Heart left ventricle (tissue), 16 donors: ENCODE measurements at regions of chr12 and their contacts with region 1.

Region 1: DNA sequence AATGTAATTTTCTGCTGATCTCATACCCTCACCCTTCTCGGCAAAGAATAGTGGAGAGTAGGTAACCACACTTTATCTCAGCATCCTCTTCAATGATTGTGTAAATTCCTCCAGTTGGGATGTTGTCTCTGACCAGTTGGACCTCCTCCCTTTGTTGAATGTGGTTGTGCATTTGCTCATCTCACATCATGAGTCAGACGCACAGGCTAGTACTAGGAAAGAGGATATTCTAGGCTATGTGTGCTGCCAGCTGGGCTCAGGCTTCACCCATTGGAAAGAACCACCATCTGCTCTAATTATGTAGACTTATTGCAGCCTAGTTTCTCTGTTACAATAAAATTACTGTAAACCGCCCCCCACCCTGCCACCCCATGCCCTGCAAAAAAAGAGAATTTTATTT is 90.3 kb downstream of the LMO3 start:
- DNase-seq: no peak
- ATAC-seq: no peak
- H3K4me3 ChIP-seq: no peak overlapping the region
- H3K27ac ChIP-seq: no peak overlapping the region
- H3K4me1 ChIP-seq: no peaks in the 10 kb centered on the region
- H3K27me3 ChIP-seq: no peaks in the 10 kb centered on the region
- CTCF ChIP-seq: no peak
- POLR2A ChIP-seq: no peak

Region 2: GRCh38 chr12:16421810-16422209 is 93.9 kb before region 1 on chr12:
- intact Hi-C with region 1: no loop called
- DNase-seq: no peak
- ATAC-seq: no peak
- H3K4me3 ChIP-seq: no peak overlapping the region
- H3K27ac ChIP-seq: no peak overlapping the region
- H3K4me1 ChIP-seq: no peaks in the 10 kb centered on the region
- H3K27me3 ChIP-seq: no peaks in the 10 kb centered on the region
- CTCF ChIP-seq: no peak
- POLR2A ChIP-seq: no peak

Region 3: GRCh38 chr12:16482726-16483125 is 32.9 kb before region 1 on chr12:
- intact Hi-C with region 1: loop called in 1 of 10 experiments (anchors 2 kb)
- DNase-seq: no peak
- ATAC-seq: no peak
- H3K4me3 ChIP-seq: no peak overlapping the region
- H3K27ac ChIP-seq: no peak overlapping the region
- H3K4me1 ChIP-seq: no peaks in the 10 kb centered on the region
- H3K27me3 ChIP-seq: no peaks in the 10 kb centered on the region
- CTCF ChIP-seq: no peak
- POLR2A ChIP-seq: no peak